Activated CD4-positive, alpha-beta memory T cell treated with anti-CD3 and anti-CD28 coated beads for 36 hours (primary cell): ENCODE measurements at regions of chr4 and their contacts with region 1.

Region 1: DNA sequence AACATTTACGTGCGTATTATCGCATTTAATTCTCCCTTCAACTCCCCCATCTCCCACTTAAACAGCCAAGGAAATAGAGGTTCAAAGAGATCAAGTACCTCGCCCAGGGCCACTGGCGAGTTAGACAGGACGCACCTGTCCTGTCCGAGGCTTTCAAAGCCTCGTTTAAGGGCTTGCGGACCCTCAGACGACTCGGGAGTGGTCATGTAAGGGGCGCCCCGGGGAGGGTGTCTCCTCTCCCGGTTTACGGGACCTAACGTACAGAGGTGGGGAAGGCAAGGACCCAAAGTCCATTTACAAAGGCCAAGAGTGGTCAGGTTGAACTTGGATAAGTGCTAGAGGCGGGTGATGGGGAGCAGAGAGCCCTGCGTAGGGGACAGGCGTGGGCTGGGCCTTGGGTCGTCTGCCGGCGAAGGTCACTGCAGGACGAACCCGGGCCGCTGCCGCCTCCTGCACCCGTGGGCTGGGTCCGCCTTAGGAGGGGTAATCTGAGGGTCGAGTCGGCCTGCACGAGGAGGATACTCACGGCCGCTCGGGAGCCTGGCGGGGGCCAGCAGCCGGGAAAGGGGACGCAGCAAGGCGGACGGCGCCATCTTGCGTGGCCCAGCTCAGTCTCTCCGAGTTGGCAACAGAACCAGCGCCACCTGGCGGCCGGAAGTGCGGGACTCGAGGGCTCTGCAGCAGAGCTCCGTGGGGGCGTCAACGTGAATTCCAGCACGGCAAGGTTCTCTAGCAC is 5.9 kb upstream of the NAA15 start:
- DNase-seq: peak; percentile 97
- H3K4me3 Mint-ChIP-seq: peak overlapping the region; percentile 93
- H3K27ac Mint-ChIP-seq: peak overlapping the region; percentile 94
- H3K4me1 Mint-ChIP-seq: peaks cover 29% of the 10 kb centered on the region
- H3K27me3 Mint-ChIP-seq: no peaks in the 10 kb centered on the region

Region 2: GRCh38 chr4:139229534-139230039 is 65.8 kb before region 1 on chr4:
- CTCF ChIA-PET with region 1: interaction called, 36 read pairs
- POLR2A ChIA-PET with region 1: no interaction called
- intact Hi-C with region 1: loop called (anchors 1 kb)
- DNase-seq: no peak
- H3K4me3 Mint-ChIP-seq: no peak overlapping the region
- H3K27ac Mint-ChIP-seq: no peak overlapping the region
- H3K4me1 Mint-ChIP-seq: no peaks in the 10 kb centered on the region
- H3K27me3 Mint-ChIP-seq: no peaks in the 10 kb centered on the region

Region 3: GRCh38 chr4:139279760-139280620 is 15.4 kb before region 1 on chr4 and contains the start of gene MGARP:
- CTCF ChIA-PET with region 1: interaction called, 10 read pairs
- POLR2A ChIA-PET with region 1: interaction called, 3 read pairs
- intact Hi-C with region 1: loop called (anchors 2 kb)
- DNase-seq: peak; percentile 30
- H3K4me3 Mint-ChIP-seq: peak within 1 kb of the TSS; percentile 60
- H3K27ac Mint-ChIP-seq: no peak within 1 kb of the TSS
- H3K4me1 Mint-ChIP-seq: peaks cover 13% of the 10 kb centered on the region
- H3K27me3 Mint-ChIP-seq: peaks cover 40% of the 10 kb centered on the region
- total RNA-seq, gene MGARP: 0.22 TPM in 1 of 2 experiments, not detected in the other

Region 4: DNA sequence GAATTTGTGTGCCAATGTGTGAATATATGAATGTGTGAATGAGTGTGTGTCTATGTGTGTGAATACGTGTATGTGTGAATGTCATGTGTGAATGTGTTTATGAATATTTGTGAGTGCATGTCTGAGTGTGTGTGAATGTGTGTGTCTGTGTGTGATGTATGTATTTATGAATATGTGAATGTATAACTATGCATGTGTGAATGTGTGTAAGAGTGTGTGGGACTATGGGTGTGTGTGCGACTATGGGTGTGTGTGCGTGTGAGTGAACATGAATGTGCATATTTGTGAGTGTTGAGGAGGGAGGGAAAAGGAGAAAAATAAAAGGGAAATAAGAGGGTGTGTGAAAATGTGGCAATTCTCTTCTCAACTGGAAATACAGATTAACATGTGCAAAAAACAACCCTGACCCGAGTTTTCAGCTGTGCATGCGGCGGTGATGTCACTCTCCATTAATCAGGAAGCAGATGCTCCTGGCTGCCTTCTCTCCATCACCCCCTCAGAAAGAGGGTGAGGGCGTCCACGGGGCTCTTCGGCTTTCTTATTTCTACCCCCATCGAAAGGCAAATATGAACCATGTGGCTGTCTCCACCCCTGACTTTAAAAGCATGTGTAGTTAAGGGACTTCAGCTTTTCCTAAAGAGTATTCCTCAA is 638.8 kb after region 1 on chr4:
- CTCF ChIA-PET with region 1: no interaction called
- POLR2A ChIA-PET with region 1: no interaction called
- intact Hi-C with region 1: no loop called
- DNase-seq: no peak
- H3K4me3 Mint-ChIP-seq: no peak overlapping the region
- H3K27ac Mint-ChIP-seq: no peak overlapping the region
- H3K4me1 Mint-ChIP-seq: no peaks in the 10 kb centered on the region
- H3K27me3 Mint-ChIP-seq: peaks cover 4% of the 10 kb centered on the region